Naive thymus-derived CD4-positive, alpha-beta T cell (primary cell): ENCODE measurements at regions of chr13 and their contacts with region 1.

Region 1: GRCh38 chr13:72113931-72114330 is 246.9 kb upstream of the DACH1 start:
- DNase-seq: no peak
- ATAC-seq: no peak
- H3K4me3 ChIP-seq: no peak overlapping the region
- H3K4me3 Mint-ChIP-seq: no peak overlapping the region
- H3K27ac ChIP-seq: no peak overlapping the region
- H3K27ac Mint-ChIP-seq: no peak overlapping the region
- H3K4me1 ChIP-seq: no peaks in the 10 kb centered on the region
- H3K4me1 Mint-ChIP-seq: no peaks in the 10 kb centered on the region
- H3K27me3 ChIP-seq: no peaks in the 10 kb centered on the region
- H3K27me3 Mint-ChIP-seq: no peaks in the 10 kb centered on the region

Region 2: DNA sequence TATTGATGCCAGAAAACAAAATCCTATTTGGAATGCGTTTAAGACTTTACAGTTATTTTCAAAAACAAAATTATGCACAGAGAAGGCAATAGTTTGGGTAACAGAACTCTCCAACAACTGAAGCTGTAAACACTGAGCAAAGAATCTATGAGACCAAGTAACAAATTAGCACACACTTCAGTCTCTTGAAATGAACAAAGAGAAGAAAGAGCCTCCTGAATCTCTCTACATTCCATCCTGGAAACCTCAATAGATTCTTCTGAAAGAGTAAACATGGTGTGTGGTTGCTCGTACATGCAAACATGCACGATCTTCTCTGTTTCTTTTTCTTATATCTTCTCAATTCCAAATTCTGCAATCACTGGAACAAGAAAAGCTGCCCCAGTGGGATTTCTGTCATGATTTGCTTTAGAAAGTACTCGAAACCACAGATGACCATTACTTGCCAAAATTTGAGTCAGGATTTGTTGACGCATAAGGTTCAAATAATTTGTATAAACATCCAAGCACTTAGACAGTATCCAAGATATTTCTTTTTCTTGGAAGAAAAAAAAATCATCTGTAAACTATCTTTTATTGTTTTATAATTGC is 109.1 kb before region 1 on chr13:
- CTCF ChIA-PET with region 1: no interaction called
- POLR2A ChIA-PET with region 1: no interaction called
- intact Hi-C with region 1: no loop called
- DNase-seq: no peak
- ATAC-seq: no peak
- H3K4me3 ChIP-seq: no peak overlapping the region
- H3K4me3 Mint-ChIP-seq: no peak overlapping the region
- H3K27ac ChIP-seq: no peak overlapping the region
- H3K27ac Mint-ChIP-seq: no peak overlapping the region
- H3K4me1 ChIP-seq: no peaks in the 10 kb centered on the region
- H3K4me1 Mint-ChIP-seq: no peaks in the 10 kb centered on the region
- H3K27me3 ChIP-seq: no peaks in the 10 kb centered on the region
- H3K27me3 Mint-ChIP-seq: no peaks in the 10 kb centered on the region

Region 3: GRCh38 chr13:72127031-72127430 is 13.1 kb after region 1 on chr13:
- CTCF ChIA-PET with region 1: no interaction called
- POLR2A ChIA-PET with region 1: no interaction called
- intact Hi-C with region 1: loop called in 1 of 2 experiments (anchors 1 kb)
- DNase-seq: no peak
- ATAC-seq: no peak
- H3K4me3 ChIP-seq: no peak overlapping the region
- H3K4me3 Mint-ChIP-seq: no peak overlapping the region
- H3K27ac ChIP-seq: no peak overlapping the region
- H3K27ac Mint-ChIP-seq: no peak overlapping the region
- H3K4me1 ChIP-seq: no peaks in the 10 kb centered on the region
- H3K4me1 Mint-ChIP-seq: no peaks in the 10 kb centered on the region
- H3K27me3 ChIP-seq: no peaks in the 10 kb centered on the region
- H3K27me3 Mint-ChIP-seq: no peaks in the 10 kb centered on the region